Colonic mucosa (tissue), 4 donors: ENCODE measurements at regions of chr3 and their contacts with region 1.

Region 1: DNA sequence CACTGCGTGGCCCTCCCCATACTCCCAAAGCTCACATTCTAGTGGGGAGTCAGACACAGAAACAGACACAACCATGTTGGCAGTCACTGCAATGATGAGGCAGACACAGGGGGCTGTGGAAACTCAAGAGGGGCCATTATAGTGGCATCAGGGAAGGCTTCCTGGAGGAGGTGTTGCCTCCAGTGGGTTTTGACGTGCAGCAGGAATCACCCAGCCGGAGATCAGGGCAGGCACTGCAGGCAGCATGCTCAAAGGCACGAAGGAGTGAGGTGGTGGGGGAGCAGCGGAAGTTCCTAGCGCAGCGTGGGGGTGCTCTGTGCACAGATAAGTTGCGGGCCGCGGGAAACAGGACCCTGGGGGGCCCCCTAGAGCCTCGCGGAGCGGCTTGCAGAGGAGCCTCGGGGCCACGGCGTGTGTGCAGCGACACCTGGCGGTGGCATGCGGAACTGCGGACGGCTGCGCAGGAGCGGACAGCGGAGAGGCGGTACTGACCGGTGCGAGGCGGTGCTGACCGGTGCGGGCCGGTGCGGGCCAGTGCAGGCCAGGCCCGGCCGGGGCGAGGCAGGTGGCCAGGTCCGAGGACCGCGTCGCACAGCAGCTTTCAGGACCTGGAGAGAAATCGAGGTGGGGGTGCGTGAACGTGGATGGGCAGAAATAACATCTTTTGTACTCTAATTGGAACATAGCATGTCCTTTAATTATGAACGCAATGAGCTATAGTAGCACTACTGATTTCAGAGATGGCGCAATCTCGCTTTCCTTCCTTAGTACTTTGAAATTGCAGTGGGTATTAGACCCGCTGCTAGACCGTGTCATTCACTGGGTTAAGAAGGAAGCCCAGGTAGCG is 101.5 kb downstream of the FBLN2 start:
- DNase-seq: peak; percentile 76
- H3K4me3 ChIP-seq: no peak overlapping the region
- H3K27ac ChIP-seq: no peak overlapping the region
- H3K4me1 ChIP-seq: peaks cover 9% of the 10 kb centered on the region
- H3K27me3 ChIP-seq: peaks cover 6% of the 10 kb centered on the region
- CTCF ChIP-seq: peak; percentile 100

Region 2: DNA sequence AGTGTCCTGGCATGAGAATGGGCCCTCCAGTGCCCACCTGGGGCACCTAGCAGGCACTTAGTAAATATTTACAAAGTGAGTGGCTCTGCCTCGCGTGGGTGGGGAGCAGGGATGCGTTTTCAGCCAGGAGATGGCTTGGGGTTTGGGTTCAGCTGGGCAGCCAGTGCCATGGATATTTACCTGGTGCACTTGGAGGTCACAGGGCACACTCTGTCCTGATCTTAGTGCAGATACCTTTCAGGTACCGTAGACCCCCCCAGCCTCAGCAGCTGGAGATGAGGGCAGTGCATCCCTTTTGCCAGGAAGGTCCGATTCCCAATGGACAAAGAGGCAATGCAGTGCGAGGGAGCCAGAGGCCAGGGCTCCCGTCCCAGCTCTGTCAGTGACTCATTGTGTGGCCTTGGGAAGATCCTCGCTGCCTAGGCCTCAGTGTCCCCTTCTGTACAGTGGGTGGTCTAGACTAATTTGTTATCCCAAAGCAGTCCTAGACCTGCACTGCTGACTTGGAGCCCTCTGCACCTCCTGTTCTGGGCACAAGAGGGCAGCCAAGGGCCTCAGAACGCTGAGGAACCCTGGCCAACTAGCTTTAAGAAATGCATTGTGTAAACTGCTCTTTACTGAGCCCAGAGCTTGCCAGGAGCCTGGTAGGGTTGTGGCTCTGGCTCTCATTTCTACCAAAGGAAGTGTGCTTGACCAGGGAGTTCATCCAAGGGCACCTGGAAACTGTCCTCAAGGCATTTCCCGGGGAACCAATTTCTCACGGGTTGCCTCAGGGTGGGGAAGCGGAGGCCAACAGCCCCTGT is 154.3 kb before region 1 on chr3:
- intact Hi-C with region 1: loop called (anchors 2 kb)
- DNase-seq: peak; percentile 74
- H3K4me3 ChIP-seq: no peak overlapping the region
- H3K27ac ChIP-seq: no peak overlapping the region
- H3K4me1 ChIP-seq: no peaks in the 10 kb centered on the region
- H3K27me3 ChIP-seq: no peaks in the 10 kb centered on the region
- CTCF ChIP-seq: peak; percentile 83